Colonic mucosa (tissue), 4 donors: ENCODE measurements at regions of chr12 and their contacts with region 1.

Region 1: GRCh38 chr12:107607464-107608392 is 77.9 kb upstream of the PWP1 start:
- DNase-seq: peak; percentile 77
- H3K4me3 ChIP-seq: no peak overlapping the region
- H3K27ac ChIP-seq: no peak overlapping the region
- H3K4me1 ChIP-seq: no peaks in the 10 kb centered on the region
- H3K27me3 ChIP-seq: no peaks in the 10 kb centered on the region
- CTCF ChIP-seq: peak; percentile 84

Region 2: GRCh38 chr12:107131832-107132616 is 475.7 kb before region 1 on chr12:
- intact Hi-C with region 1: loop called (anchors 2 kb)
- DNase-seq: peak; percentile 21
- H3K4me3 ChIP-seq: no peak overlapping the region
- H3K27ac ChIP-seq: no peak overlapping the region
- H3K4me1 ChIP-seq: no peaks in the 10 kb centered on the region
- H3K27me3 ChIP-seq: no peaks in the 10 kb centered on the region
- CTCF ChIP-seq: peak; percentile 69

Region 3: DNA sequence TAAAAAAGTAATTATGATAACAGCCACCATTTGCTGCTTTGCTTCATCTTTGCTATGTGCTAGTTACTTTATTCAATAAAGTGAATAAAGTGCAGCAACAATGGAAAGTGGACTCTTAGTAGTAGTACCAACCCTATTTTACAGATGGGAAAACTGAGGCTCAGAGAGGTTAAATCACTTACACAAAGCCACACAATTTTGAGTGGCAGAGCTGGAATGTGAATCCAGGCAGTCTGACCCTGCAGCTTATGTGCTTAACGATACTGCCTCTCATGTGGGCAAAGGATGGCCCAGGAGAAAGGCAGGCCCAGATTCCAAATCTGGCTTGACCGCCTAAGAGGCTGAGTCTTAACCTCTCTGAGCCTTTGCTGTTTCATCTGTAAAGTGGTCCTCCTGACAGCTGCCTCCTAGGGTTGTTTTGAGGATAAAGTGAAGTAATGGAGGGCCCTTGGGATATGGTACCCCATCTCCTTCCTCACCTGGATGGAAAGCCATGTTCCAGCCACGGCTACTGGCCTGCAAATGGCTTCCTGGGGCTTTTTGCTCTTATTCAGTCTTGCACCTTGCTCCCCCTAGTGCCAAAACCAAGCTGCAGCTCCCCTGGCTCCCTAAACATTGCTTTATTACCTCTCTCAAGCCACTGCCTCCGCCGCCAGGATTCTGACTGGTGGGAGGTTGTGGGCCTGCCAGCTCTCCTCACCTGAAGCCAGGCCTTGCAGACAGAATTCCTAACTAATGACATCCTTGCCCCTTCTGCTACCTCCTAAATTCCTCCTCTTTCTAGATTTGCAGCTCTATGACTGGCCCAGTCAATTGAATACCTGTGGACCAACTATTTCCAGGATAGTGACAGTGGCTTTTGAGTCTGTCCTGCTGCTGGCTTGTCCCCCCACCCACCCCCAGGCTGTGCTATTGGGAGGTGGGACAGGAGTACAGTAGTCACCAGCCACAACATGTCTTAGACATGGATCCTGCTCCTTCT is 205.4 kb before region 1 on chr12:
- intact Hi-C with region 1: loop called (anchors 5 kb)
- DNase-seq: peak; percentile 41
- H3K4me3 ChIP-seq: no peak overlapping the region
- H3K27ac ChIP-seq: no peak overlapping the region
- H3K4me1 ChIP-seq: no peaks in the 10 kb centered on the region
- H3K27me3 ChIP-seq: no peaks in the 10 kb centered on the region
- CTCF ChIP-seq: peak; percentile 42

Region 4: GRCh38 chr12:107448198-107448597 is 159.5 kb before region 1 on chr12:
- intact Hi-C with region 1: loop called (anchors 5 kb)
- DNase-seq: no peak
- H3K4me3 ChIP-seq: no peak overlapping the region
- H3K27ac ChIP-seq: no peak overlapping the region
- H3K4me1 ChIP-seq: no peaks in the 10 kb centered on the region
- H3K27me3 ChIP-seq: no peaks in the 10 kb centered on the region
- CTCF ChIP-seq: peak; percentile 12

Region 5: DNA sequence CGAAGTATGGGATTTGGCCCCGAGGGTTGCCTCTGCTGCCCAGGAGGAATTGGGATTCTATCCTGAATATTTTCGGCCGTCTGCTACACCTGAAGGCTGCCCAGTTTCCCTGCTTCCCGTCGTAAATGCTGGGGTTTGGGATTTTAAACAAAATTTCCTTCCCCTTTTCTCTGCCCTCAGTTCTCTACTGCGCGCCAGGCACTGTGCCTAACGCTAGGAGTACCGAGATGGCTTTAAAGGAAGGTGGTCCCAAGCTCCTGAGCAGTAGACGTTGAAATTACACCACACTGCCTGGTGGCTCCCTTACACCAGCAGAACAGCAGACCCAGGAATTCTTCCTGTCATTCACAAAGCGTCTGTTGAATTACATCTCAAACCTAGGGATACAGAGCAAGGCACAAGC is 153.8 kb after region 1 on chr12:
- intact Hi-C with region 1: no loop called
- DNase-seq: no peak
- H3K4me3 ChIP-seq: peak overlapping the region; percentile 82
- H3K27ac ChIP-seq: no peak overlapping the region
- H3K4me1 ChIP-seq: no peaks in the 10 kb centered on the region
- H3K27me3 ChIP-seq: no peaks in the 10 kb centered on the region
- CTCF ChIP-seq: no peak